Transverse colon (tissue), 4 donors: ENCODE measurements at regions of chr2 and their contacts with region 1.

Region 1: DNA sequence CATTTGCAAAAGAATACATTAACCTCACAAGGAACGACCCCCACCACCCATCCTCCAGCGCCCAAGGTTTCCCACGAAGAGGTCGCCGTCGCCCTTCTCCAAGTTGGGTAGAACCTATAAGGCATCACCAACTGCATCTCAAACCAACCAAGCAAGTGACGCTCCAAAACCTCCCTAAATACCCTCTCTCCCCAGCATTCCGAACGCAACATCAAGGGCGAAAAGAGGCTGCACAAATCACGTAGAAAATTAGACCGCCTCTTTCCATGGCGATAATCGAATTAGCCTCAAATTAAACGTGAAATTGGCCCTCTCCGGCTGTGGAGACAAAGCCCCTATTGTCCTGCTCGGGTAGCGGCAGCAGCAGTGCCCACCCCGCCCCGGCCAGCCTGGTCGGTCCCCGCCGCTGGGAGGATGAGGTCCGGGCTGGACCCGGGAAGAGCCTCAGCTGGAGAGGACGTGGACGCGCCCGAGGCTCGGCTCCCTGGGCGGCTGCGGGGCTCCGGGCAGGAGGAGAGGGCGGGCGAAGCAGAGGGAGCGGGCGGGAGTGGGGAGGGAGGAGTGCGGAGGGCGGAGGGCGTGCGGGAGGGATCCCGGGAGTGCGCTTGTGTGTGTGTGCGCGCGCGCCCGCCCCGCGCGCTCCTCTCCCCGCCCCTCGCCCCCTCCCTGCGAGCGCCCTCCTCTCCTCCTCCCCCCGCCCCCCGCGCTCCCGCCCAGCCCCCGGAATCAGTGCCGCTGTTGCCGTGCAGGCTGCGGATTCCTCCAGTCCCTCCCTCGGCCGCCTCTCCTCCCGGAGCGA is at the start of gene SPTBN1:
- DNase-seq: peak; percentile 77
- H3K4me3 ChIP-seq: peak within 1 kb of the TSS; percentile 71 to 84 (median 77)
- H3K27ac ChIP-seq: peak within 1 kb of the TSS; percentile 86 to 94 (median 92)
- H3K4me1 ChIP-seq: peaks cover 0 to 22% (median 14%) of the 10 kb centered on the region in 4 donors
- H3K27me3 ChIP-seq: peaks cover 78% of the 10 kb centered on the region
- CTCF ChIP-seq: no peak
- EP300 ChIP-seq: no peak
- POLR2A ChIP-seq: peak; percentile 41
- total RNA-seq, gene SPTBN1: 269 to 301 (median 285) TPM

Region 2: GRCh38 chr2:53913721-53914120 is 542.0 kb before region 1 on chr2:
- in situ Hi-C with region 1: no loop called
- intact Hi-C with region 1: no loop called
- DNase-seq: no peak
- H3K4me3 ChIP-seq: no peak overlapping the region
- H3K27ac ChIP-seq: no peak overlapping the region
- H3K4me1 ChIP-seq: no peaks in the 10 kb centered on the region
- H3K27me3 ChIP-seq: no peaks in the 10 kb centered on the region
- CTCF ChIP-seq: no peak
- EP300 ChIP-seq: no peak
- POLR2A ChIP-seq: no peak

Region 3: DNA sequence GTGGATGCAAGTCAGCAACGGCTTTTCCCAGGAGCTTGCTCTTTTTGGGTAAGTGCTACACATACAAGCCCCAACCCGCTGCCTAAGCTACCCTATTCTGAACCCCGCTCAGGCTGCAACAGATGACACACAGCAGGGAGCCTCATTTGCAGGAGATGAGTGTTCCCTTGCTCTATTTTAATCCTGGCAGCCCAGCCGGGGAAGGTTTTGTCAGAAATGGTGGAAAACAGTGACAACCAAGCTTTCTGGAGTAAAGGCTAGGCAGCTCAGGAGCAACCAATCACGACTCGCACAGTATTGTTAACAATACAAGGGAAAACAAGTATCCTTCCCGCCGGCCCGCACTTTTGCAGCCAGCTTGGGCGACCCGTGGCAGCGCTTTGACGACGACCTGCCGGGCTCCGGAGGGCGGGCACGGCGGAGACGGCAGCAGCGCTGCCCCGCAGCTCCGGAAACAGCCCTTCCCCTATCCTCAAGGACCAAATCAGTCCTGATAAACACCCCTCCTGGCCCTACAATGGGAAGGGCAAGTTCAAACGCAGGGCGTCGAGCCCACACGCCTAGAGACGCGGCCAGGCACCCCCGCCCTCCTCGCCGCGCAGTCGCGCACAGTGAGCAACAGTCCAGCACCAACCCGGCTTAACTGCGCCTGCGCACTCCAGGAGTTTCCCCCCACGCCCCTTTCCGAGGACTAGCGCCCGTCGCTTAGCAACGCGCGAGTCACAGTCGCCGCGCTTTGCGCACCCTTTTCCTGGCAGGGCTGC is 125.4 kb before region 1 on chr2:
- in situ Hi-C with region 1: no loop called
- intact Hi-C with region 1: loop called (anchors 10 kb)
- DNase-seq: peak; percentile 96
- H3K4me3 ChIP-seq: peak overlapping the region; percentile 30 to 56 (median 44)
- H3K27ac ChIP-seq: peak overlapping the region; percentile 78 to 89 (median 84)
- H3K4me1 ChIP-seq: peaks cover 3 to 13% (median 9%) of the 10 kb centered on the region in 4 donors
- H3K27me3 ChIP-seq: no peaks in the 10 kb centered on the region
- CTCF ChIP-seq: no peak
- EP300 ChIP-seq: no peak
- POLR2A ChIP-seq: peak; percentile 78